ENCODE measurements at regions of chr2 and their contacts with region 1.

Region 1: DNA sequence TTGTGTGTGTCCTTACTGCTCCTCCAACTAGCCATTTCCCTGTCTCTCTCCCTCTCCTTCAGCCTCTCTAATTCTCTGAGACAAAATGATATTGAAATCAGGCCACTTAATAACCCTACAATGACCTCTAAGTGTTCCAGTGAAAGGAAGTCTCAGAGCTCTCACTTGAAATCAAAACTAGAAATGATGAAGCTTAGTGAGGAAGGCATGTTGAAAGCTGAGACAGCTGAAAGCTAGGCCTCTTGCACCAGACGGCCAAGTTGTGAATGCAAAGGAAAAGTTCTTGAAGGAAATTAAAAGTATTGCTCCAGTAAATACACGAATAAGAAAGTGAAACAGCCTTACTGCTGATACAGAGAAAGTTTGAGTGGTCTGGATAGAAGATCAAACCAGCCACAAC is 72.9 kb downstream of the PRKCE start:
- DNase-seq: no peak
- ATAC-seq: no peak
- H3K4me3 Mint-ChIP-seq: peak overlapping the region; percentile 56
- H3K27ac Mint-ChIP-seq: peak overlapping the region; percentile 98
- H3K4me1 Mint-ChIP-seq: peaks cover 95% of the 10 kb centered on the region
- H3K27me3 Mint-ChIP-seq: no peaks in the 10 kb centered on the region
- CTCF ChIP-seq: no peak

Region 2: GRCh38 chr2:45699032-45699658 is 25.2 kb before region 1 on chr2:
- CTCF ChIA-PET with region 1: interaction called, 3 read pairs
- POLR2A ChIA-PET with region 1: interaction called, 47 read pairs
- intact Hi-C with region 1: loop called (anchors 1 kb)
- DNase-seq: no peak
- ATAC-seq: peak; percentile 61
- H3K4me3 Mint-ChIP-seq: peak overlapping the region; percentile 57
- H3K27ac Mint-ChIP-seq: peak overlapping the region; percentile 89
- H3K4me1 Mint-ChIP-seq: peaks cover 61% of the 10 kb centered on the region
- H3K27me3 Mint-ChIP-seq: no peaks in the 10 kb centered on the region
- CTCF ChIP-seq: no peak

Measured in activated B cell treated with CpG ODN at 0.5 μM for 24 hours (primary cell).